MCF 10A (cell line): ENCODE measurements at regions of chr12 and their contacts with region 1.

Region 1: GRCh38 chr12:87667378-87667777 is 361.8 kb downstream of the C12orf50 start:
- DNase-seq: peak; percentile 55
- H3K4me3 Mint-ChIP-seq: no peak overlapping the region
- H3K27ac Mint-ChIP-seq: no peak overlapping the region
- H3K4me1 Mint-ChIP-seq: peaks cover 8% of the 10 kb centered on the region
- H3K27me3 Mint-ChIP-seq: no peaks in the 10 kb centered on the region
- CTCF ChIP-seq: peak; percentile 47

Region 2: GRCh38 chr12:85951823-85952222 is 1715.6 kb before region 1 on chr12:
- CTCF ChIA-PET with region 1: interaction called, 4 read pairs
- POLR2A ChIA-PET with region 1: no interaction called
- intact Hi-C with region 1: loop called (anchors 10 kb)
- DNase-seq: peak; percentile 24
- H3K4me3 Mint-ChIP-seq: no peak overlapping the region
- H3K27ac Mint-ChIP-seq: no peak overlapping the region
- H3K4me1 Mint-ChIP-seq: no peaks in the 10 kb centered on the region
- H3K27me3 Mint-ChIP-seq: no peaks in the 10 kb centered on the region
- CTCF ChIP-seq: peak; percentile 55

Region 3: GRCh38 chr12:86727151-86727550 is 940.2 kb before region 1 on chr12:
- CTCF ChIA-PET with region 1: interaction called, 3 read pairs
- POLR2A ChIA-PET with region 1: no interaction called
- intact Hi-C with region 1: loop called (anchors 10 kb)
- DNase-seq: peak; percentile 72
- H3K4me3 Mint-ChIP-seq: peak overlapping the region; percentile 16
- H3K27ac Mint-ChIP-seq: no peak overlapping the region
- H3K4me1 Mint-ChIP-seq: peaks cover 22% of the 10 kb centered on the region
- H3K27me3 Mint-ChIP-seq: no peaks in the 10 kb centered on the region
- CTCF ChIP-seq: no peak

Region 4: DNA sequence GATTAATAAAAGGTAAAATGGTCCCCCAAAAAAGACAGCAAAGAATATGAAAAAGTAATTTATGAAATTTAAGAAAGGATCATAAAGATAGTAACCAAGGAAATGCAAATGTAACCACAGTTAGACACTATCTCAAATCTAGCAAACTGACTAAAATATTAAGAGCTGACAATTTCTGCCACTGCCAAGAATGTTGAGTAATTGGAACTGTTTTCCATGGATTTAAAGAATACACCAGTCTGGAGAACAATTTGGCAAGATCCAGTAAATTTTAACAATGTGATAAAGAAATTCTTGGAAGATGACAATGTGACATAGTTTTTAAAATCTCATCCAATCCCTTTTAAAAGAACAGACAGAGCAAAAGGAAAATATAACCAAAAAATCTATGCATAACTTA is 613.2 kb before region 1 on chr12:
- CTCF ChIA-PET with region 1: no interaction called
- POLR2A ChIA-PET with region 1: no interaction called
- intact Hi-C with region 1: no loop called
- DNase-seq: no peak
- H3K4me3 Mint-ChIP-seq: no peak overlapping the region
- H3K27ac Mint-ChIP-seq: no peak overlapping the region
- H3K4me1 Mint-ChIP-seq: no peaks in the 10 kb centered on the region
- H3K27me3 Mint-ChIP-seq: no peaks in the 10 kb centered on the region
- CTCF ChIP-seq: no peak

Region 5: GRCh38 chr12:87157791-87158190 is 509.6 kb before region 1 on chr12:
- CTCF ChIA-PET with region 1: no interaction called
- POLR2A ChIA-PET with region 1: no interaction called
- intact Hi-C with region 1: loop called (anchors 10 kb)
- DNase-seq: peak; percentile 88
- H3K4me3 Mint-ChIP-seq: no peak overlapping the region
- H3K27ac Mint-ChIP-seq: peak overlapping the region; percentile 74
- H3K4me1 Mint-ChIP-seq: peaks cover 42% of the 10 kb centered on the region
- H3K27me3 Mint-ChIP-seq: no peaks in the 10 kb centered on the region
- CTCF ChIP-seq: no peak

Region 6: DNA sequence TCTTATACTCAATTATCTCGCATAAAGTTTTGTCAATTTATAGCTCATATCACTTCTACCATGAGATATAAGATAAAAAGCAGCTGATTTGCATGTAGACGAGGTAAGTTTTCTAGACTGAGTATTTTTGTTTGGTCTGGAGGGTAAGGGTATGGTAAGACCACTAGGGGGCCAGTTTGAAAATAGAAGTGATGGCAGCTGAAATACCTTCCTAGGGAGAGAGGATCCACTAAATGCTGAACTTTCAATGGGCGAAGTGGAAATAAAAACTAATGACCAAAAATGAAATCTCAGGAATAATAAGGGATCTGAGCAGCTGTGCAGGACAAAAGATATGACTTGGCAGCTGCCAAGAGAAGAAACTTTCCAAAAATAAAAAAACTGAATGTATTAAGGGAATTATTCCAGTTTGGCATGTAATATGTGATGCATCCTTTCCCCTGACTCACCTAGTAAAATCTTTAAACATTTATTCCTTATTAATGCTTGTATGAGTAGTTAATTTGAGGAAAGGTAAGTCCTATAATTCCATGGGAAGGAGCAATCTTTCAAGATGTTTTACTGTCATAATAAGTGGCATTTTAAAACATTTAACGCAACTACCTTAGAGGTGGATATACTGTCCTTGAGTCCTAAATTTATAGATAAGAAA is 392.7 kb before region 1 on chr12:
- CTCF ChIA-PET with region 1: interaction called, 3 read pairs
- POLR2A ChIA-PET with region 1: no interaction called
- intact Hi-C with region 1: loop called (anchors 10 kb)
- DNase-seq: peak; percentile 29
- H3K4me3 Mint-ChIP-seq: no peak overlapping the region
- H3K27ac Mint-ChIP-seq: no peak overlapping the region
- H3K4me1 Mint-ChIP-seq: no peaks in the 10 kb centered on the region
- H3K27me3 Mint-ChIP-seq: no peaks in the 10 kb centered on the region
- CTCF ChIP-seq: peak; percentile 27

Region 7: DNA sequence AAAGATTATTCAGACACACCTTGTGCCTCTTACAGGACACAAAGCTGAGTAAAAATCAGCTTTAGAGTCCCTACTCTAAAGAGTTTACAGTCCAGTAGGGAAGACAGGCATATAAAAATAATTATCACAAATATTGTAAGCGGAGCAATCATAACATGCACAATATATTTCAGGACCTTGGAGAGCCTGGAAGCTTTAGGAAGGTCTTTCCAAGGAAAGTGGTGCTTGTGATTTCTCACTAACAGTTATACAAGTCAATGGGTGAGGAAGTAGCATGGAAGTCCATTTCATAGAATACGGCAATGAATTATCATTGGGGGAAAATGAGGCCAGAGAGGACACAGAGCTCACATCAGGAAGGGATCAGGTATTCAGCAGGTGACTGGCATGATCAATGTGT is 93.6 kb after region 1 on chr12:
- CTCF ChIA-PET with region 1: no interaction called
- POLR2A ChIA-PET with region 1: no interaction called
- intact Hi-C with region 1: no loop called
- DNase-seq: no peak
- H3K4me3 Mint-ChIP-seq: no peak overlapping the region
- H3K27ac Mint-ChIP-seq: no peak overlapping the region
- H3K4me1 Mint-ChIP-seq: peaks cover 13% of the 10 kb centered on the region
- H3K27me3 Mint-ChIP-seq: no peaks in the 10 kb centered on the region
- CTCF ChIP-seq: no peak